Aorta (tissue), 5 donors: ENCODE measurements at regions of chr2 and their contacts with region 1.

Region 1: GRCh38 chr2:154452906-154453493 is 245.5 kb upstream of the KCNJ3 start:
- DNase-seq: no peak
- ATAC-seq: no peak
- H3K4me3 ChIP-seq: no peak overlapping the region
- H3K27ac ChIP-seq: no peak overlapping the region
- H3K4me1 ChIP-seq: no peaks in the 10 kb centered on the region
- H3K27me3 ChIP-seq: no peaks in the 10 kb centered on the region

Region 2: GRCh38 chr2:154495455-154495868 is 42.5 kb after region 1 on chr2:
- intact Hi-C with region 1: no loop called
- DNase-seq: no peak
- ATAC-seq: no peak
- H3K4me3 ChIP-seq: no peak overlapping the region
- H3K27ac ChIP-seq: no peak overlapping the region
- H3K4me1 ChIP-seq: peaks cover 0 to 4% of the 10 kb centered on the region in 2 donors
- H3K27me3 ChIP-seq: no peaks in the 10 kb centered on the region

Region 3: DNA sequence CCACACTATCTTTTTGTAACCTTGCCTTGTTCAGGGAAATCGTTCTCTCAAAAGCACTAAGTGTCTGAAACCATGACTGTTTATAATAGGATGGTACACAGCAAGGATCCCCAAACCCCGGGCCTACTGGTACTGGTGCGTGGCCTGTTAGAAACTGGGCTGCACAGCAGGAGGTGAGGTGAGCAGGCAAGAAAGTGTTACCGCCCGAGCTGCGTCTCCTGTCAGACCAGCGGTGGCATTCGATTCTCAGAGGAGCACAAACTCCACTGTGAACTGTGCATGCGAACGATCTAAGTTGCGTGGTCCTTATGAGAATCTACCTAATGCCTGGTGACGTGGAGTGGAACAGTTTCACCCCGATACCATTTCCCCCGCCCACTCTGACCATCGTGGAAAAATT is 163.7 kb after region 1 on chr2:
- intact Hi-C with region 1: loop called in 1 of 2 experiments (anchors 5 kb)
- DNase-seq: no peak
- ATAC-seq: no peak
- H3K4me3 ChIP-seq: no peak overlapping the region
- H3K27ac ChIP-seq: no peak overlapping the region
- H3K4me1 ChIP-seq: no peaks in the 10 kb centered on the region
- H3K27me3 ChIP-seq: no peaks in the 10 kb centered on the region

Region 4: DNA sequence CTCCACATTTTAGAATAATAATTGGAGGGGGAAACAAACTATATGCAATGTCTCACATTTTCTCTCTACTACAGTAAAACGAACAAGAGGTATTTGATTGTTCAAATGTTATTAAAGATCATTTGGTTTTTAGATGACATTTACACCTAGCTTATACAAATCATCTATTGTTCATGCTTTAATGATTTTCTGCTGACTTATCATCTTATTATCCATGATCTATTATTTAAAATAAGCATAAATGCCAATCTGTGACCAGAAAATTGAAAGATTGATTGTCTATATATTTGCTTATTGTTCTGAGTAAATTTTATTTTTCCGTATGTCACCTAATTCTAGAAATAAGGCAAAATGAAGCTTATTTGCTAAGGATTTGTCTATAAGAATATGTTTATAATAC is 782.7 kb after region 1 on chr2:
- intact Hi-C with region 1: loop called in 1 of 2 experiments (anchors 10 kb)
- DNase-seq: no peak
- ATAC-seq: no peak
- H3K4me3 ChIP-seq: no peak overlapping the region
- H3K27ac ChIP-seq: no peak overlapping the region
- H3K4me1 ChIP-seq: no peaks in the 10 kb centered on the region
- H3K27me3 ChIP-seq: no peaks in the 10 kb centered on the region